Activated CD8-positive, alpha-beta T cell treated with anti-CD3 and anti-CD28 coated beads for 36 hours (primary cell): ENCODE measurements at regions of chr9 and their contacts with region 1.

Region 1: GRCh38 chr9:87950765-87951488 is 23.4 kb downstream of the CDK20 start:
- DNase-seq: no peak
- ATAC-seq: peak; percentile 56
- H3K4me3 Mint-ChIP-seq: no peak overlapping the region
- H3K27ac Mint-ChIP-seq: no peak overlapping the region
- H3K4me1 Mint-ChIP-seq: no peaks in the 10 kb centered on the region
- H3K27me3 Mint-ChIP-seq: peaks cover 26% of the 10 kb centered on the region
- CTCF ChIP-seq: peak; percentile 70

Region 2: GRCh38 chr9:88056876-88057275 is 105.9 kb after region 1 on chr9:
- CTCF ChIA-PET with region 1: no interaction called
- POLR2A ChIA-PET with region 1: no interaction called
- intact Hi-C with region 1: loop called (anchors 10 kb)
- DNase-seq: no peak
- ATAC-seq: no peak
- H3K4me3 Mint-ChIP-seq: no peak overlapping the region
- H3K27ac Mint-ChIP-seq: no peak overlapping the region
- H3K4me1 Mint-ChIP-seq: no peaks in the 10 kb centered on the region
- H3K27me3 Mint-ChIP-seq: no peaks in the 10 kb centered on the region
- CTCF ChIP-seq: no peak